PC-3 (cell line): ENCODE measurements at regions of chr17 and their contacts with region 1.

Region 1: GRCh38 chr17:75131280-75132017 is at the start of gene NT5C:
- DNase-seq: peak; percentile 76
- ATAC-seq: peak; percentile 68
- H3K4me3 ChIP-seq: peak within 1 kb of the TSS; percentile 72
- H3K27ac ChIP-seq: peak within 1 kb of the TSS; percentile 85
- H3K4me1 ChIP-seq: peaks cover 29% of the 10 kb centered on the region
- H3K27me3 ChIP-seq: no peaks in the 10 kb centered on the region
- CTCF ChIP-seq: peak; percentile 77
- total RNA-seq, gene NT5C: 116 and 131 TPM in 2 replicates

Region 2: DNA sequence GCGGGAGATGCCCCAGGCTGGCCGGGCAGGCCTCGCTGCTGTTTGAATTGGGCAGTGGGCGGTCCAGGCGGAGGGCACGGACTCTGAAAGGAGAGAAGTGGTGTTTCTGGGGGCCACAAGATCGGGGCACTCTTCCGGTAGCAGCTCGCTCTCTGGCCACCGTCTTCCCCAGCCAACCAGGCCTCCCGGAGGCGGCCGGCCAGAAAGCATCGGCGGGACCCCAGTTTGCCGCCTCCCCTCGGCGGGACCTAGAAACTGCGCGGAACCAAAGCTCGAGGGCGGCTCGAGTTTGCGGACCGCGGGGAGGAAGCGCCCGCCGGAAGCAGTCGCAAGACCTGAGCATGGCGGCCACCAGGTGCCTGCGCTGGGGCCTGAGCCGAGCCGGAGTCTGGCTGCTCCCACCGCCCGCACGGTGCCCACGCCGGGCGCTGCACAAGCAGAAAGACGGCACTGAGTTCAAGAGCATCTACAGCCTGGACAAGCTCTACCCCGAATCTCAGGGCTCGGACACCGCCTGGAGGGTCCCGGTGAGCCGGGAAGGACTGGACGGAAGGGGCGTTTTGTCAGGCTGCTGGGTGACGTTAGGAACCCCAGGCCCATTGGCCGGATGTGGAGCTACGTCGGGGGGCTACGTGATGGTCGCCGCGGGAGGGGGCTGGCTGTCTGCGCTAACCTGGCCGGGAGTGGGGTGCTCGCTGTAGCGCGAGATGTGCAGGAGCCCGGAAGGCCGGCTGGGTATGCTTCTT is 118.9 kb before region 1 on chr17 and contains the start of gene MRPL58:
- CTCF ChIA-PET with region 1: no interaction called
- POLR2A ChIA-PET with region 1: no interaction called
- intact Hi-C with region 1: no loop called
- DNase-seq: peak; percentile 91
- ATAC-seq: peak; percentile 83
- H3K4me3 ChIP-seq: peak within 1 kb of the TSS; percentile 87
- H3K27ac ChIP-seq: peak within 1 kb of the TSS; percentile 68
- H3K4me1 ChIP-seq: peaks cover 30% of the 10 kb centered on the region
- H3K27me3 ChIP-seq: no peaks in the 10 kb centered on the region
- CTCF ChIP-seq: peak; percentile 38; the same call in 1 of the 2 replicates
- total RNA-seq, gene MRPL58: 151 and 195 TPM in 2 replicates

Region 3: DNA sequence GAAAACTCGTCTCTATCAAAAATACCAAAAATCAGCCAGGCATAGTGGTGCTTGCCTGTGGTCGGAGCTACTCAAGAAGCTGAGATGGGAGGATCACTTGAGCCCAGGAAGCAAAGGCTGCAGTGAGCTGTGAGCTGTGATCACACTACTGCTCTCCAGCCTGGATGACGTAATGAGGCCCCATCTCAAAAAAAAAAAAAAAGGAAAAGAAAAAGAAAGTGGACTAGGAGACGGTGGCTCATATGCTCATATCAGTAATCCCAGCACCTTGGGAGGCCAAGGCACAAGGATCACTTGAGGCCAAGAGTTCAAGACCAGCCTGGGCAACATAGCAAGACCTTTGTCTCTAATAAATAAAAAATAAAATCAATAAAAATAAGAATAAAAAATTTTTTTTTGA is 60.1 kb after region 1 on chr17:
- CTCF ChIA-PET with region 1: interaction called, 12 read pairs
- POLR2A ChIA-PET with region 1: no interaction called
- intact Hi-C with region 1: no loop called
- DNase-seq: no peak
- ATAC-seq: no peak
- H3K4me3 ChIP-seq: no peak overlapping the region
- H3K27ac ChIP-seq: no peak overlapping the region
- H3K4me1 ChIP-seq: peaks cover 5% of the 10 kb centered on the region; the same call in 1 of the 2 replicates
- H3K27me3 ChIP-seq: no peaks in the 10 kb centered on the region
- CTCF ChIP-seq: no peak

Region 4: DNA sequence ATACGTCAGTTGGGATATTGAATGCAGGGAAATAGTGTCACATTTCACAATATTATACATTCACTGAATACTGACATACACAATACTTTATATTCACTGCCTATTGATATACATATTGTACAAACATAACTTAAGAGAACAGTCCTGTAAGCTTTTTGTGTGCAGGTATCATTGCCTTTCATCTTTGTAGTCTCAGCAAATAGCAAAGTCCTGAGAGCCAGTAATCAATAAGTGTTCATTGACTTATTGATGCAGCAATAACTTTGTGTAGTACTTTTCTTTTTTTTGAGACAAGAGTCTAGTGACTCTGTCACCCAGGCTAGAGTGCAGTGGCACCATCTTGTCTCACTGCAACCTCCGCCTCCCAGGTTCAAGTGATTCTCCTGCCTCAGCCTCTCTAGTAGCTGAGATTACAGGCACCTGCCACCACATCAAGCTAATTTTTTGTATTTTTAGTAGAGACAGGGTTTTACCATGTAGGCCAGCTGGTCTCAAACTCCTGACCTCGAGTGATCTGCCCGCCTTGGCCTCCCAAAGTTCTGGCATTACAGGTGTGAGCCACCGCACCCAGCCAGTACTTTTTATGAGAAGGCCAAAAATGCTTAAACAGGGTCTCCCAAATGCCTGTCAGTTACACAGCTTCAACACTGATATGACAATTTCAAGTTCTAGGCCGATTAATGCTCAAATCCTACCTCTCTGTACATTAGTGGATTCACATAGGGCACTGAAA is 68.6 kb after region 1 on chr17:
- CTCF ChIA-PET with region 1: interaction called, 3 read pairs
- POLR2A ChIA-PET with region 1: no interaction called
- intact Hi-C with region 1: loop called (anchors 5 kb)
- DNase-seq: no peak
- ATAC-seq: no peak
- H3K4me3 ChIP-seq: no peak overlapping the region
- H3K27ac ChIP-seq: no peak overlapping the region
- H3K4me1 ChIP-seq: peaks cover 5% of the 10 kb centered on the region; the same call in 1 of the 2 replicates
- H3K27me3 ChIP-seq: no peaks in the 10 kb centered on the region
- CTCF ChIP-seq: no peak

Region 5: DNA sequence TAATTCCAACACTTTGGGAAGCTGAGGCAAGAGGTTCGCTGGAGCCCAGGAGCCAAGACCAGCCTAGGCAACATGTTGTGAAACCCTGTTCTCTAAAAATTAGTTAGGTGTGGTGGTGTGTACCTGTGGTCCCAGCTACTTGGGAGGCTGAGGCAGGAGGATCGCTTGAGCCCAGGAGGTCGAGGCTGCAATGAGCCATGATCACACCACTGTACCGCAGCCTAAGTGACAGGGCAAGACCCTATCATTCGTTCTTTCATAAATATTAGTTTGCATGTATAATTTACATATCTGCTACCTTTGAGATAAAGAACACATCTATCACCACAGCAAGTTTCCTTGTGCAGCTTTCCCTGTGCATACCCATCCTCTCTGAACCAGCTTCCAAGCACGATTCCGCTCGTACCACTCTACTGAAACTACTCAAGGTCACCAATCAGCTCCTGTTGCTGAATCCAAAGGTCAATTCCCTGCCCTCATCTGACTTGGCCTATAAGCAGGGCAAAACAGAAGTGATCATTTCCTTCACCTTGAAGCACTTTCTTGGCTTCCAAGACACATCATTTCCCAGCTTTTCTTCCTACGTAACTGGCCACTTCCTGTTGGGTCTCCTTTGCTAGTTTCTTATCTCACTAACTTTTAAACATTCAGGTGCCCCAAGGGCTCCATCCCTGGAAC is 224.9 kb after region 1 on chr17:
- CTCF ChIA-PET with region 1: no interaction called
- POLR2A ChIA-PET with region 1: no interaction called
- intact Hi-C with region 1: no loop called
- DNase-seq: no peak
- ATAC-seq: no peak
- H3K4me3 ChIP-seq: no peak overlapping the region
- H3K27ac ChIP-seq: no peak overlapping the region
- H3K4me1 ChIP-seq: peaks cover 13% of the 10 kb centered on the region
- H3K27me3 ChIP-seq: no peaks in the 10 kb centered on the region
- CTCF ChIP-seq: no peak